ENCODE measurements at regions of chr13 and their contacts with region 1.

Region 1: DNA sequence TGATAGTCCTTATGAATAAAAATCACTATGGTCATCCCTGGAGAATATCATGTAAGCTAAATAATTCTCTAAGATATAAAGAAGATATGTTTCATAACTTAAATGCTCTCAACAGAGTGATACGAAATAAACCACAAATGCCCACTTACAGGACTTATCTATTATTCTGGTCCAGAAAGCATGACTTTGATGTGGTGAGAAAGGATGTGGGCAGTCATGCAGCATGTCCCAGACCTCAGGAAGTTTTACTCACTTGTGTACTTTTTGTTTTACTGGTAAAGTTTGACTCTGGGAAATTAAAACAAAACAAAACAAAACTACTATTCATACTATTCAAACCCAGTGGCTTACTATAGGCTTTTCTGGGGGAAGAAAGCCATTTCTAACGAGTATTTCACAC is 483.2 kb upstream of the SLITRK6 start:
- DNase-seq: no peak
- ATAC-seq: no peak
- H3K4me3 ChIP-seq: no peak overlapping the region
- H3K27ac ChIP-seq: no peak overlapping the region
- H3K4me1 ChIP-seq: no peaks in the 10 kb centered on the region
- H3K27me3 ChIP-seq: no peaks in the 10 kb centered on the region
- CTCF ChIP-seq: no peak
- EP300 ChIP-seq: no peak
- POLR2A ChIP-seq: no peak
- RAD21 ChIP-seq: no peak

Region 2: DNA sequence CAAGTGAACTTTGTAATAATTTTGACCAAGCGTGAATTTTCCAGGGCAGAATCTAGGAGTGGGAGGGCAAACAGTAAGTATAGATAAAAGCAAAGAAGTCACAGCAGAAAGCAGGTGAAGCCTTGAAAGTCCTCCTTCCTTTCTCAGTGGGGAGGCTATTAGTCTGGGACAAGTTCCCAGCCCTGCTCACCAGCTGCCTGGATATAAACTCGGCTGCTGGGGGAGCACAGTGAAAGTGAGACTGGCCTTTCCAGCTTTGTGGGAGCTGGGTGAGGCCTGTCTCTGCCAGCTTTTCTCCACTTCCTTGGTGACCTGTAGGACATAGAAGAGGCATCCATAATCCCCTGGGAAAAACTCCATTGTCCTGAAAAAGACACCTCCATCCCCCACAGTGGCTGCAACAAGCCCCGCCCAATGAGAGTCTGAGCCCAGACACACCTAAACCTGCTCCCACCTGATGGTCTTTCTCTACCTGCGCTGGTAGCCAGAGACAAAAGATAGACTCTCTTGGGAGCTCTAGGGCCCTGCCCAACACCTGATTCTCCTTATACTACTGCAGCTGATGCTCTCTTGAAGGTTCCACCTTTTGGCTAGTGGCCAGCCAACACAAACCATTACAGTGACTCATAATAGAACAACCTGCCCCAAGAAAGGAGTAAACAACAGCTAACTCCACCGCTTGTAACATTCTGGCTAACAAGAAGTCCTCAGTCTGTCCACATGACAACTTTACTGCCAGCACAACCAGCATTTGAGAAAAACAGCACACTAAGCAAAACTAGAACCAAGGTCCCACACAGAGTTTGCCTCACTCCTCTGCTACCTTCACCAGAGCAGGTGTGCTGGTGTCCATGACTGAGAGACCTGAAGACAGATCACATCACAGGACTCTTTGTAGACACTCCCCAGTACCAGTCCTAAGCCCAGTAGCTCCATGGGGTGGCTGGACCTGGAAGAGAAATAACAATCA is 231.0 kb before region 1 on chr13:
- CTCF ChIA-PET with region 1: no interaction called
- POLR2A ChIA-PET with region 1: no interaction called
- in situ Hi-C with region 1: no loop called
- intact Hi-C with region 1: no loop called
- DNase-seq: no peak
- ATAC-seq: no peak
- H3K4me3 ChIP-seq: no peak overlapping the region
- H3K27ac ChIP-seq: no peak overlapping the region
- H3K4me1 ChIP-seq: no peaks in the 10 kb centered on the region
- H3K27me3 ChIP-seq: no peaks in the 10 kb centered on the region
- CTCF ChIP-seq: no peak
- EP300 ChIP-seq: no peak
- POLR2A ChIP-seq: no peak
- RAD21 ChIP-seq: no peak

Region 3: GRCh38 chr13:86193281-86193680 is 89.2 kb before region 1 on chr13:
- CTCF ChIA-PET with region 1: no interaction called
- POLR2A ChIA-PET with region 1: no interaction called
- in situ Hi-C with region 1: loop called (anchors 10 kb)
- intact Hi-C with region 1: no loop called
- DNase-seq: no peak
- ATAC-seq: no peak
- H3K4me3 ChIP-seq: no peak overlapping the region
- H3K27ac ChIP-seq: no peak overlapping the region
- H3K4me1 ChIP-seq: no peaks in the 10 kb centered on the region
- H3K27me3 ChIP-seq: no peaks in the 10 kb centered on the region
- CTCF ChIP-seq: no peak
- EP300 ChIP-seq: no peak
- POLR2A ChIP-seq: no peak
- RAD21 ChIP-seq: no peak

Region 4: DNA sequence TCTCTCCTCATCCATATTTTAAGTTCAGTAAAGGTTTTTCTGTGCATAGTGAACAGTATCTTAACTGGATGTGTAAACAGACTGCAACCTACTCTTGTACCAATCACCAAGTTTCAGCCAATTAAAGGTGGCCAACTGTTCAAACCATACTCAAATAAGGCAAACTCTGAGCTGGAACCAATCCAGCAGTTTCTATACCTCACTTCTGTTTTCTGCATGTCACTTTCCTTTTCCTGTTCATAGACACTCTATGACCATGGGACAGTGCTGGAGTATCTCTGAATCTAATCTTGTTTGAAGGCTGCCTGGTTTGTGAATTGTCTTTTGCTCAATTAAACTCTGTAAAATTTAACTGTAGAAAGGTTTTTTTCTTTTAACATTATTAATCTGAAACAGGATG is 12.9 kb before region 1 on chr13:
- CTCF ChIA-PET with region 1: no interaction called
- POLR2A ChIA-PET with region 1: no interaction called
- in situ Hi-C with region 1: no loop called
- intact Hi-C with region 1: no loop called
- DNase-seq: no peak
- ATAC-seq: no peak
- H3K4me3 ChIP-seq: no peak overlapping the region
- H3K27ac ChIP-seq: no peak overlapping the region
- H3K4me1 ChIP-seq: no peaks in the 10 kb centered on the region
- H3K27me3 ChIP-seq: no peaks in the 10 kb centered on the region
- CTCF ChIP-seq: no peak
- EP300 ChIP-seq: no peak
- POLR2A ChIP-seq: no peak
- RAD21 ChIP-seq: no peak

Measured in K562 (cell line).